Heart left ventricle (tissue), 16 donors: ENCODE measurements at regions of chr3 and their contacts with region 1.

Region 1: GRCh38 chr3:129238945-129239706 is 10.3 kb upstream of the COPG1 start:
- DNase-seq: no peak
- ATAC-seq: peak in 3 of 4 donors; percentile 66 to 83 (median 77)
- H3K4me3 ChIP-seq: no peak overlapping the region
- H3K27ac ChIP-seq: peak overlapping the region in 7 of 12 donors; percentile 14 to 93 (median 52)
- H3K4me1 ChIP-seq: peaks cover 0 to 55% (median 6%) of the 10 kb centered on the region in 12 donors
- H3K27me3 ChIP-seq: no peaks in the 10 kb centered on the region
- CTCF ChIP-seq: no peak
- POLR2A ChIP-seq: no peak

Region 2: GRCh38 chr3:128863560-128863959 is 375.6 kb before region 1 on chr3:
- intact Hi-C with region 1: no loop called
- DNase-seq: no peak
- ATAC-seq: no peak
- H3K4me3 ChIP-seq: no peak overlapping the region
- H3K27ac ChIP-seq: no peak overlapping the region
- H3K4me1 ChIP-seq: peaks cover 0 to 15% (median 10%) of the 10 kb centered on the region in 12 donors
- H3K27me3 ChIP-seq: no peaks in the 10 kb centered on the region
- CTCF ChIP-seq: peak in 6 of 12 donors; percentile 6 to 31 (median 14)
- POLR2A ChIP-seq: no peak

Region 3: DNA sequence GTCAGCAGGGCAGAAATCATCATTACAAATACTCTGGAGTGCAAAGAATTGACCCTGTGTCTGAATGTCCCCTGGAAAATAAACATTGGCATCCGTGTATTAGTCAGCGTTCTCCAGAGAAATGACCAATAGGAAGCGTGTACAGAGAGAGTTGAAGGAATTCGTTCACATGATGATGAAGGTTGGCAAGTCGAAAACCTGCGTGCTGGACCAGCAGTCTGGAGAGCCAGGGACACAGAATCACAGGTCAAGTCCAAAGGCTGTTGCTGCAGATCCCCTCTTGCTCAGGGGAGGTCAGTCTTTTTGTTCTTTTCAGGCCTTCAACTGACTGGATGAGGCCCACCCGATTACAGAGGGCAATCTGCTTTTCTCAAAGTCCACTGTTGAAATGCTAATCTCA is 161.9 kb before region 1 on chr3:
- intact Hi-C with region 1: no loop called
- DNase-seq: no peak
- ATAC-seq: no peak
- H3K4me3 ChIP-seq: no peak overlapping the region
- H3K27ac ChIP-seq: no peak overlapping the region
- H3K4me1 ChIP-seq: no peaks in the 10 kb centered on the region
- H3K27me3 ChIP-seq: no peaks in the 10 kb centered on the region
- CTCF ChIP-seq: no peak
- POLR2A ChIP-seq: no peak

Region 4: GRCh38 chr3:129161860-129162531 is 77.1 kb before region 1 on chr3:
- intact Hi-C with region 1: loop called in 1 of 10 experiments (anchors 2 kb)
- DNase-seq: peak in 1 of 5 donors; percentile 35
- ATAC-seq: peak in 3 of 4 donors; percentile 7 to 11 (median 8)
- H3K4me3 ChIP-seq: peak overlapping the region; percentile 65 to 93 (median 78)
- H3K27ac ChIP-seq: peak overlapping the region; percentile 71 to 99 (median 92)
- H3K4me1 ChIP-seq: peaks cover 4 to 26% (median 20%) of the 10 kb centered on the region in 12 donors
- H3K27me3 ChIP-seq: no peaks in the 10 kb centered on the region
- CTCF ChIP-seq: no peak
- POLR2A ChIP-seq: no peak

Region 5: DNA sequence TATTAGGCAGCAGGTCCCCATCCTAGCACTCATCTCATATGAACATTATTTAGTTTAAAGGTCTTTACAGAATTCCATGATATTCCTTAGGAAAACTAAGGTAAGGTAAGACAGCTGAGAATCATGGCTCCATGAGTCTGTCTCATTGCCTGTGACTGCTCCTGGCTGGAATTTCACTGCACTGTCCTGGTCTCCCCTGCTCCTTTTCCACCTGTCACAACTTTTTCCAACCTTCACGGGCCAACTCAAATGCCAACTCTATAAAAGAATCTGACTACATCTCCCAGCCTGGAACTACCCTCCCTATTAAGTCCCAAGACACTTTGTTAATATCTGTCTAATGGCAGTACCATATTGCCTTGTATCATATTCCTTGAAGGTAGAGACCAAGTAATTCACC is 63.1 kb before region 1 on chr3:
- intact Hi-C with region 1: loop called in 1 of 10 experiments (anchors 5 kb)
- DNase-seq: no peak
- ATAC-seq: peak in 3 of 4 donors; percentile 29 to 50 (median 44)
- H3K4me3 ChIP-seq: peak overlapping the region in 1 of 12 donors; percentile 4
- H3K27ac ChIP-seq: peak overlapping the region in 9 of 12 donors; percentile 5 to 99 (median 38)
- H3K4me1 ChIP-seq: peaks cover 32 to 97% (median 91%) of the 10 kb centered on the region in 12 donors
- H3K27me3 ChIP-seq: no peaks in the 10 kb centered on the region
- CTCF ChIP-seq: no peak
- POLR2A ChIP-seq: no peak

Region 6: GRCh38 chr3:129424185-129424841 is 185.2 kb after region 1 on chr3:
- intact Hi-C with region 1: no loop called
- DNase-seq: no peak
- ATAC-seq: no peak
- H3K4me3 ChIP-seq: no peak overlapping the region
- H3K27ac ChIP-seq: peak overlapping the region in 1 of 12 donors; percentile 46
- H3K4me1 ChIP-seq: peaks cover 0 to 24% (median 11%) of the 10 kb centered on the region in 12 donors
- H3K27me3 ChIP-seq: no peaks in the 10 kb centered on the region
- CTCF ChIP-seq: no peak
- POLR2A ChIP-seq: no peak